Activated CD4-positive, alpha-beta T cell treated with anti-CD3 and anti-CD28 coated beads, Interleukin-2, amount 10 ng/mL, durations not matched to agents 24 days and 14 days (primary cell): ENCODE measurements at regions of chr17 and their contacts with region 1.

Region 1: DNA sequence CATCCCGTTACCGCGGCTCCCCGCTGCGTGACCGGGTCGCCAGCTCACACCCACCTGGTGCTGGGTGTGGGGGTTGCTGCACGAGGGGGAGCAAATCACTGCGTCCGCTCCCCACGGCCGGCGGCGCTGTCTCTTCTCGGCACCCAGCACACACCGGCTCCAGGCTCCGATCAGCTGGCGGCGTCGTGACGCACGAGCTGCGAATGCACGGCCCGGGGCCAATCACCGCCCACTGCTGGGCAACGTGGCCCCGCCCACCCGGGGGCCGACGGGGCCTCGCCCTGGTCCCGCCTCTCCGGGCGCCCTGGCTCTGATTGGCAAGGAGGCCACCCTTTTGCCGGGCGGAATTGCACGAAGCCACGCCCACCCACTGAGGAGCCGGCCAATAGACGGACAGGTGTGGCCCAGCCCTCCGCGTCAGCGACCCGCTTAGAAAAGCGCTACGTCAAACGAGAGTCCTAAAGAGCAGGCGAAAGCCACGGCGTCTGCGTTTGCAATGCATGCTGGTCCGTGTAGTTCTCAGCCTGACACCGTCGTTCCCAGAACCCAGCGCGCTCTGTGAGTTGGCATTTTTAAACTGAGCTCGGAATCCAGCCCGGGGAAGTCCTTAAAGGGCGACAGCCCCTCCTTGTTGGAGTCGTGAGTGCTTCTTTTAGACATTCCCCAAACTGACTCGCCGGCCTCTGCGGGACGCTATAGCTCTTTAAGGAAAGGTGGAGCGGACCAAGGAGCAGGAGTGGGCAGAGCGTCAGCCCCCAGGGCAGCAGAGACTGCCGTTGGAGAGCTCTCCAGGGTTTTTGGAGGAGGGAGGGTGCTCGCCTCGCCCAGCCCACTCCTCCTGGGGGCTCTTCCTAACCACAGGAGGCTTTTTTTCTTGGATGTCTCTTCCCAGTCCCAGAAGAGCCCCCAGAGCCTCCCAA is 6.2 kb upstream of the TLCD2 start:
- DNase-seq: peak; percentile 100
- H3K4me3 Mint-ChIP-seq: peak overlapping the region; percentile 95
- H3K27ac Mint-ChIP-seq: peak overlapping the region; percentile 98
- H3K4me1 Mint-ChIP-seq: peaks cover 28% of the 10 kb centered on the region
- H3K27me3 Mint-ChIP-seq: peaks cover 5% of the 10 kb centered on the region

Region 2: DNA sequence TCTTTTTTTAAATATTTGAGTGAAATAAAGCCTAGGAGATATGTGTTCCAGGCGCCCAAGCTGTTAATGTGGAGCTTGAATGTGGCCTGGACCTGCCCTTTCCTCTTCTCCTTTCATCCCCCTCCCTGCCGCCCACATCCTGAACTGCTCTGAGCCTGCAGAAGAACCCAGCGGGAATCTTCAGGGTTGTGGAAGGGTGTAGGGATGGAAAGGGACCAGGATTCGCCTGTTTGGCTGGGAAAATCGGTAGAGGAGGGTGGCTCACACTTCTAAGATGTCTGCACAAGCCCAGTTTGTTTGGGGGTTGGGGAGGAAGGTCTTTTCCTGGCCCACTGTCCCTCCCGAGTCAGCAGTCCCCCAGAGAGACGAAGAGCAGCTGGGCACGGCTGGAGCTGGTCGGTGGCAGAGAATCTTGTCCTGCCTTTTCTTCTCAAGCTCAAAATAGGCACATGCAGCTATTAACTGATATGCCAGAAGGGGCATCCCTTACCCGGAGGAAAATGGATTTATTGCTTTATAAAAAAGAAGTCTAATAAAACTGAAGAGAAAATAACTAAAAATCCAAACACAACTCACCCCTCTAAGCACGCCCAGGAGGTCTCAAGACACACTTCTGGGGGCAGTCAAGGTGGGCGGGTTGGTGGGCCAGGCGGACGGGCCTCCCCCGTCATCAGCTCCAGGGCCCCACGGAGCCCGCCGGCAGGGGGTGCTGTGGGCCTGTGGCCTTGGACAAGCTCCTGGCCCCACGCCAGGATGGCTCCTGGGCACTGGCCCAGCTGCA is 142.2 kb before region 1 on chr17:
- intact Hi-C with region 1: no loop called
- DNase-seq: peak; percentile 90
- H3K4me3 Mint-ChIP-seq: no peak overlapping the region
- H3K27ac Mint-ChIP-seq: no peak overlapping the region
- H3K4me1 Mint-ChIP-seq: peaks cover 8% of the 10 kb centered on the region
- H3K27me3 Mint-ChIP-seq: no peaks in the 10 kb centered on the region

Region 3: GRCh38 chr17:1648963-1649843 is 67.1 kb before region 1 on chr17:
- intact Hi-C with region 1: loop called (anchors 2 kb)
- DNase-seq: peak; percentile 98
- H3K4me3 Mint-ChIP-seq: peak overlapping the region; percentile 77
- H3K27ac Mint-ChIP-seq: peak overlapping the region; percentile 66
- H3K4me1 Mint-ChIP-seq: peaks cover 31% of the 10 kb centered on the region
- H3K27me3 Mint-ChIP-seq: no peaks in the 10 kb centered on the region

Region 4: GRCh38 chr17:1684378-1685189 is 31.8 kb before region 1 on chr17 and contains the start of gene PRPF8:
- intact Hi-C with region 1: loop called (anchors 2 kb)
- DNase-seq: peak; percentile 100
- H3K4me3 Mint-ChIP-seq: peak within 1 kb of the TSS; percentile 98
- H3K27ac Mint-ChIP-seq: peak within 1 kb of the TSS; percentile 97
- H3K4me1 Mint-ChIP-seq: peaks cover 30% of the 10 kb centered on the region
- H3K27me3 Mint-ChIP-seq: no peaks in the 10 kb centered on the region
- total RNA-seq, gene PRPF8: 432 and 442 TPM in 2 replicates

Region 5: DNA sequence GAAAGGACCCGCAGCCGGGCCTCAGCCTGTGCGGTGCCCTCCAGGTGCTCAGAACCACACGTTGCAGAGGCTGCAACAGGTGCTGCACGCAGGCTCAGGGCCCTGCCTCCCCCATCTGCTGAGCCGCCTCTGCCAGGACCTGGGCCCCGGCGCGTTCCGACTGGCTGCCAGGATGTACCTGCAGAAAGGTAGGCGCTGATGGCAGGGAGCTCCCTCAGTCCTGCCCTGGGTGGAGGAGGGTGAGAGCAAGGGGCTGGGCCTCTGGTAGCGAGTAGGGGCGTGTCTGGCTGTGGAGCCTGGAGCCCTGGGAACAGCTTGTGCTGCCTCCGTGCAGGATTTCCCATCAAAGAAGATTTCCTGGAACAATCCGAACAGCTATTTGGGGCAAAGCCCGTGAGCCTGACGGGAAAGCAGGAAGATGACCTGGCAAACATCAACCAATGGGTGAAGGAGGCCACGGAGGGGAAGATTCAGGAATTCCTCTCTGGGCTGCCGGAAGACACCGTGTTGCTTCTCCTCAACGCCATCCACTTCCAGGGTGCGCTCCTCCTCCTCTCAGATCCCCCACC is 30.7 kb after region 1 on chr17:
- intact Hi-C with region 1: no loop called
- DNase-seq: no peak
- H3K4me3 Mint-ChIP-seq: no peak overlapping the region
- H3K27ac Mint-ChIP-seq: no peak overlapping the region
- H3K4me1 Mint-ChIP-seq: no peaks in the 10 kb centered on the region
- H3K27me3 Mint-ChIP-seq: no peaks in the 10 kb centered on the region

Region 6: GRCh38 chr17:1829592-1830257 is 113.4 kb after region 1 on chr17 and contains the starts of genes RPA1 and SMYD4:
- intact Hi-C with region 1: loop called (anchors 2 kb)
- DNase-seq: peak; percentile 98
- H3K4me3 Mint-ChIP-seq: peak within 1 kb of the TSS; percentile 89
- H3K27ac Mint-ChIP-seq: peak within 1 kb of the TSS; percentile 89
- H3K4me1 Mint-ChIP-seq: peaks cover 53% of the 10 kb centered on the region
- H3K27me3 Mint-ChIP-seq: no peaks in the 10 kb centered on the region
- total RNA-seq, gene RPA1: 234 and 238 TPM in 2 replicates
- total RNA-seq, gene SMYD4: 27.1 and 30.7 TPM in 2 replicates

Region 7: GRCh38 chr17:1870592-1870991 is 154.3 kb after region 1 on chr17:
- intact Hi-C with region 1: loop called (anchors 2 kb)
- DNase-seq: peak; percentile 84
- H3K4me3 Mint-ChIP-seq: peak overlapping the region; percentile 72
- H3K27ac Mint-ChIP-seq: peak overlapping the region; percentile 92
- H3K4me1 Mint-ChIP-seq: peaks cover 71% of the 10 kb centered on the region
- H3K27me3 Mint-ChIP-seq: no peaks in the 10 kb centered on the region

Region 8: GRCh38 chr17:2029911-2030778 is 313.8 kb after region 1 on chr17 and contains the start of gene DPH1:
- intact Hi-C with region 1: loop called (anchors 1 kb)
- DNase-seq: peak; percentile 96
- H3K4me3 Mint-ChIP-seq: peak within 1 kb of the TSS; percentile 97
- H3K27ac Mint-ChIP-seq: peak within 1 kb of the TSS; percentile 87
- H3K4me1 Mint-ChIP-seq: peaks cover 19% of the 10 kb centered on the region
- H3K27me3 Mint-ChIP-seq: peaks cover 34% of the 10 kb centered on the region
- total RNA-seq, gene DPH1: 50.8 and 55.9 TPM in 2 replicates

Region 9: GRCh38 chr17:2049333-2050299 is 333.3 kb after region 1 on chr17:
- intact Hi-C with region 1: loop called (anchors 2 kb)
- DNase-seq: peak; percentile 98
- H3K4me3 Mint-ChIP-seq: peak overlapping the region; percentile 78
- H3K27ac Mint-ChIP-seq: peak overlapping the region; percentile 80
- H3K4me1 Mint-ChIP-seq: peaks cover 33% of the 10 kb centered on the region
- H3K27me3 Mint-ChIP-seq: peaks cover 9% of the 10 kb centered on the region